CD8-positive, alpha-beta T cell (primary cell): ENCODE measurements at regions of chr7 and their contacts with region 1.

Region 1: DNA sequence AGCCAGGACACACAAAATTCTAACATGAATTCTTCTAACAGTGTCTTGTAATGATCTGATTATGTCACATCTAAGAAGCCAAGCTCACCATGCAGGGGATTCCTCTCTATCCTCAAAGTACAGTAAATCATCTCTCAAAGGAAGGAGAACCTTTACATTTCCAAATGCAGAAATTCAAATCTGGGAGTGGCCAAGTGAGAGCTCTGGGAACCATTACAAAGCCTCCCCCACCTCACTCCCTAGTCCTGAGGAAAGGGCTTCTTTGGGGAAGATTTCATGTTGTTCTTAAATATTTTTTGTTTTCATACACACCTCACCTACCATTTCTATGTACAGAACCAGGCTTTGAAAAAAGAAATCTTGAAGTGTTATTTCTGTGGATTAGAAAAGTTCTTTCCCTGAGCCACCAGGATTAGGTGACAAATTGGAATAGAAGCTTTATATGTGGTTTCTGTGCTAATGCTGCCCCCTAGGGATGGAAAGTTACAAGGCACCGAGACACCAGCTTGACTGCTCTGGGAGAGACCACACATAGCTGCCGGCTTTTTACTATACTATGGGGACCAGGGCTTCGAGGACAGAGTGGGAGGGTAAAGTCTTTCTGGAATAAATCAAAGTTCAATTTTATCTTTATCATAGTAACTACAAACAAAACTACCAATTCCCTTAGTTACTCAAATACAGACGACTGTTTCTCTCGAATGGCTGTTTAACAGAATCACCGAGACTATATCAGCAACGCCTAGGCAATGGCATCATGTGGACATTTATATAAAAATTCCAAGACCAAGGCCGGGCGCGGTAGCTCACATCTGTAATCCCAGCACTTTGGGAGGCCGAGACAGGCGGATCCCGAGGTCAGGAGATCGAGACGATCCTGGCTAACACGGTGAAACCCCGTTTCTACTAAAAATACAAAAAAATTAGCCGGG is 116.1 kb downstream of the RNF216 start:
- DNase-seq: peak; percentile 25 to 82 (median 66)
- ATAC-seq: peak; percentile 80
- H3K4me3 ChIP-seq: no peak overlapping the region
- H3K4me3 Mint-ChIP-seq: no peak overlapping the region
- H3K27ac ChIP-seq: no peak overlapping the region
- H3K27ac Mint-ChIP-seq: no peak overlapping the region
- H3K4me1 ChIP-seq: peaks cover 15% of the 10 kb centered on the region
- H3K4me1 Mint-ChIP-seq: peaks cover 24% of the 10 kb centered on the region
- H3K27me3 ChIP-seq: no peaks in the 10 kb centered on the region
- H3K27me3 Mint-ChIP-seq: no peaks in the 10 kb centered on the region
- CTCF ChIP-seq: peak; percentile 92

Region 2: DNA sequence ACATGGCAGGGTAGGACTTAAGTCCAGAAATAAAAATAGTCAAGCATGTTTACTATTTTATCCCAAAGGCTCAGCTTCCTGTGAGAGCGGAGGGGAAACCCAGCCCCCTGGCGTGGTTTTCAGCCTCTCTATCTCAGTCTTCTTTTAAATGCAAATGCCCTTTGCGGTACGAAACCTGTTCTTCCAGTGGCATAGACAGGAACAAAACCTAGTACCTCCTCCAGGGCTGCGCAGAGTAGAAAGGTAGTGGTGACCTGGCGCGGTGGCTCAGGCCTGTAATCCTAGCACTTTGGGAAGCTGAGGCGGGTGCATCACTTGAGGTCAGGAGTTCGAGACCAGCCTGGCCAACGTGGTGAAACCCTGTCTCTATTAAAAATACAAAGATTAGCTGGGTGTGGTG is 1164.5 kb before region 1 on chr7:
- CTCF ChIA-PET with region 1: no interaction called
- POLR2A ChIA-PET with region 1: no interaction called
- intact Hi-C with region 1: no loop called
- DNase-seq: no peak
- ATAC-seq: no peak
- H3K4me3 ChIP-seq: no peak overlapping the region
- H3K4me3 Mint-ChIP-seq: no peak overlapping the region
- H3K27ac ChIP-seq: no peak overlapping the region
- H3K27ac Mint-ChIP-seq: no peak overlapping the region
- H3K4me1 ChIP-seq: no peaks in the 10 kb centered on the region
- H3K4me1 Mint-ChIP-seq: no peaks in the 10 kb centered on the region
- H3K27me3 ChIP-seq: no peaks in the 10 kb centered on the region
- H3K27me3 Mint-ChIP-seq: peaks cover 6% of the 10 kb centered on the region
- CTCF ChIP-seq: no peak

Region 3: DNA sequence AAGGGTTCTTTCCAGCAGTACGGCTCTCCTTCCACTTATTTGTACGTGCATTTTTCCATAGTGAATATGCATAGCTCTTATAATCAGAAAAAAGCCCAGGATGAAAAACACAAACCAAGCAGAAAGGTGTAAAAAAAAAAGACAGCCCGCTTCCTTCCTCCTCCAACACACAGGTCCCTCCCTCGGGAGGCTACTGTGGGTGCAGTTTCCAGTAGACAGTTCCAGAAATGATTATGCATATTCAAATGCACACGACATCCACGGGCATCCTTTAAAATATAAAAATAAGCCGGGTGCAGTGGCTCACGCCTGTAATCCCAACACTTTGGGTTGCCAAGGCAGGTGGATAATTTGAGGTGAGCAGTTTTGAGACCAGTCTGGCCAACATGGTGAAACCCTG is 301.6 kb before region 1 on chr7:
- CTCF ChIA-PET with region 1: interaction called, 5 read pairs
- POLR2A ChIA-PET with region 1: no interaction called
- intact Hi-C with region 1: loop called in 1 of 2 experiments (anchors 5 kb)
- DNase-seq: no peak
- ATAC-seq: no peak
- H3K4me3 ChIP-seq: no peak overlapping the region
- H3K4me3 Mint-ChIP-seq: no peak overlapping the region
- H3K27ac ChIP-seq: no peak overlapping the region
- H3K27ac Mint-ChIP-seq: no peak overlapping the region
- H3K4me1 ChIP-seq: no peaks in the 10 kb centered on the region
- H3K4me1 Mint-ChIP-seq: peaks cover 20% of the 10 kb centered on the region
- H3K27me3 ChIP-seq: no peaks in the 10 kb centered on the region
- H3K27me3 Mint-ChIP-seq: no peaks in the 10 kb centered on the region
- CTCF ChIP-seq: no peak

Region 4: GRCh38 chr7:5649641-5650040 is 15.7 kb before region 1 on chr7:
- CTCF ChIA-PET with region 1: interaction called, 12 read pairs
- POLR2A ChIA-PET with region 1: no interaction called
- intact Hi-C with region 1: no loop called
- DNase-seq: no peak
- ATAC-seq: no peak
- H3K4me3 ChIP-seq: no peak overlapping the region
- H3K4me3 Mint-ChIP-seq: no peak overlapping the region
- H3K27ac ChIP-seq: no peak overlapping the region
- H3K27ac Mint-ChIP-seq: no peak overlapping the region
- H3K4me1 ChIP-seq: no peaks in the 10 kb centered on the region
- H3K4me1 Mint-ChIP-seq: peaks cover 8% of the 10 kb centered on the region
- H3K27me3 ChIP-seq: no peaks in the 10 kb centered on the region
- H3K27me3 Mint-ChIP-seq: no peaks in the 10 kb centered on the region
- CTCF ChIP-seq: no peak

Region 5: DNA sequence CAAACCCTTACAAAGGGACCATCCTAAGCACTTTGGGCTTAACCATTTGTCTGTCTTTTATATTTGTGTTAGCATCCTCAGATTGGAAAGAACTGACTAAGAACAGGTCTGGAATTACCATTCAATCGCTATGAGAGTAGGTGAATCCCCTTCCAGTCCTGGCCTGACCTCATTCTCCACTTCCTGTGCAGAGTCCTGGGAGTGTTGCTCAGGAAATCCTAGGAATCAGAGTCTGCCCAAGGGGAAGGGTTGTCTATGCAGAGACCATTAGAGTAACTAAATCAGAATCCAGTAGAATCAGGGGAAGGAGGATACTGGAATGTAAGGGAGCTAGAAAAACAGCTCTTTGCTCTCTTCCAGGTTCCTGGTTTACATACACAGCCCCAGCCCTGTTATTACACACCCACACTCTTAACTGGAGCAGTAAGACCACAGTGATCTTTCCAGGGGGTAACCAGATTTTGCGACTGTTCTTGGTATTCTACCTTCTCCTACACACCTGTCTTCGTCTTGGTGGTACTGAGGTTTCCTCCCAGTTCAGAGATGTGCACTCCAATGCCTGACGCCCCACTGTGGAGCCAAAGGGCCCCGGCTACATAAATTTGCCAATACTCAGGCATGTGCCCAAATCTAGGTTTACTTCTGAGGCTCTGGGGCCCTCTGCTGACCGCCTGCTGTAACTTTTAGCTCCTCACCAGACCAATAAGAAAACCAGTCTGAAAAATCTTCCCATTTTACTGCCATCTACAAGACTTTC is 12.4 kb after region 1 on chr7:
- CTCF ChIA-PET with region 1: interaction called, 36 read pairs
- POLR2A ChIA-PET with region 1: interaction called, 4 read pairs
- intact Hi-C with region 1: no loop called
- DNase-seq: peak in 6 of 9 experiments; percentile 17 to 66 (median 48)
- ATAC-seq: peak; percentile 54
- H3K4me3 ChIP-seq: no peak overlapping the region
- H3K4me3 Mint-ChIP-seq: no peak overlapping the region
- H3K27ac ChIP-seq: no peak overlapping the region
- H3K27ac Mint-ChIP-seq: peak overlapping the region; percentile 30
- H3K4me1 ChIP-seq: peaks cover 36% of the 10 kb centered on the region
- H3K4me1 Mint-ChIP-seq: peaks cover 58% of the 10 kb centered on the region
- H3K27me3 ChIP-seq: no peaks in the 10 kb centered on the region
- H3K27me3 Mint-ChIP-seq: no peaks in the 10 kb centered on the region
- CTCF ChIP-seq: peak; percentile 27

Region 6: GRCh38 chr7:5694912-5695726 is 29.8 kb after region 1 on chr7:
- CTCF ChIA-PET with region 1: interaction called, 16 read pairs
- POLR2A ChIA-PET with region 1: interaction called, 7 read pairs
- intact Hi-C with region 1: no loop called
- DNase-seq: peak; percentile 18 to 88 (median 72)
- ATAC-seq: peak; percentile 75
- H3K4me3 ChIP-seq: peak overlapping the region; percentile 49 to 64
- H3K4me3 Mint-ChIP-seq: peak overlapping the region; percentile 92
- H3K27ac ChIP-seq: peak overlapping the region; percentile 54 to 65
- H3K27ac Mint-ChIP-seq: peak overlapping the region; percentile 96
- H3K4me1 ChIP-seq: peaks cover 97% of the 10 kb centered on the region
- H3K4me1 Mint-ChIP-seq: peaks cover 100% of the 10 kb centered on the region
- H3K27me3 ChIP-seq: no peaks in the 10 kb centered on the region
- H3K27me3 Mint-ChIP-seq: no peaks in the 10 kb centered on the region
- CTCF ChIP-seq: no peak